MCF 10A (cell line): ENCODE measurements at regions of chr10 and their contacts with region 1.

Region 1: GRCh38 chr10:102225646-102226541 is at the start of gene ELOVL3:
- DNase-seq: peak; percentile 64
- H3K4me3 Mint-ChIP-seq: peak within 1 kb of the TSS; percentile 62
- H3K27ac Mint-ChIP-seq: no peak within 1 kb of the TSS
- H3K4me1 Mint-ChIP-seq: peaks cover 25% of the 10 kb centered on the region
- H3K27me3 Mint-ChIP-seq: peaks cover 37% of the 10 kb centered on the region
- CTCF ChIP-seq: no peak
- total RNA-seq, gene ELOVL3: not detected in 2 replicates

Region 2: GRCh38 chr10:102167861-102168260 is 58.0 kb before region 1 on chr10:
- CTCF ChIA-PET with region 1: interaction called, 21 read pairs
- POLR2A ChIA-PET with region 1: interaction called, 14 read pairs
- intact Hi-C with region 1: loop called (anchors 1 kb)
- DNase-seq: no peak
- H3K4me3 Mint-ChIP-seq: no peak overlapping the region
- H3K27ac Mint-ChIP-seq: no peak overlapping the region
- H3K4me1 Mint-ChIP-seq: peaks cover 5% of the 10 kb centered on the region
- H3K27me3 Mint-ChIP-seq: peaks cover 11% of the 10 kb centered on the region
- CTCF ChIP-seq: no peak

Region 3: GRCh38 chr10:102245101-102245931 is 19.4 kb after region 1 on chr10 and contains the start of gene GBF1:
- CTCF ChIA-PET with region 1: interaction called, 13 read pairs
- POLR2A ChIA-PET with region 1: interaction called, 3 read pairs
- intact Hi-C with region 1: no loop called
- DNase-seq: peak; percentile 100
- H3K4me3 Mint-ChIP-seq: peak within 1 kb of the TSS; percentile 99
- H3K27ac Mint-ChIP-seq: peak within 1 kb of the TSS; percentile 97
- H3K4me1 Mint-ChIP-seq: peaks cover 45% of the 10 kb centered on the region
- H3K27me3 Mint-ChIP-seq: no peaks in the 10 kb centered on the region
- CTCF ChIP-seq: no peak
- total RNA-seq, gene GBF1: 50.0 and 50.6 TPM in 2 replicates

Region 4: GRCh38 chr10:102352066-102352715 is 126.3 kb after region 1 on chr10:
- CTCF ChIA-PET with region 1: interaction called, 354 read pairs
- POLR2A ChIA-PET with region 1: interaction called, 10 read pairs
- intact Hi-C with region 1: loop called (anchors 1 kb)
- DNase-seq: peak; percentile 72
- H3K4me3 Mint-ChIP-seq: no peak overlapping the region
- H3K27ac Mint-ChIP-seq: no peak overlapping the region
- H3K4me1 Mint-ChIP-seq: peaks cover 4% of the 10 kb centered on the region
- H3K27me3 Mint-ChIP-seq: no peaks in the 10 kb centered on the region
- CTCF ChIP-seq: peak; percentile 83

Region 5: DNA sequence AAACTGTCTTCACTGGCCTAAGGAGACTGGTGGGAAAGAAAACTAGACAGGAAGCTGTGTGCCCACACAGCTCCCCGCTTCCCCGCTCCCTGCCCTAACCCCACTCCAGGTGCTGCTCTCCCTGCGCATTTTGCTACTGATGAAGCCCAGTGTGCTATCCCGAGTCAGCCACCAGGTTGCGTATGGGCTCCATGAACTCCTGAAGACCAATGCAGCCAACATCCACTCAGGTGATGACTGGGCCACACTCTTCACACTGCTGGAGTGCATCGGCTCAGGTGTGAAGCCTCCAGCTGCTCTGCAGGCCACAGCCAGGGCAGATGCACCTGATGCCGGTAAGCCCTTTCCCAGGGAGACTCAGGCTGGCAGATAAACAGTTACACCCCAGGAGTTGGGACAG is 149.4 kb after region 1 on chr10:
- CTCF ChIA-PET with region 1: interaction called, 18 read pairs
- POLR2A ChIA-PET with region 1: no interaction called
- intact Hi-C with region 1: no loop called
- DNase-seq: no peak
- H3K4me3 Mint-ChIP-seq: no peak overlapping the region
- H3K27ac Mint-ChIP-seq: no peak overlapping the region
- H3K4me1 Mint-ChIP-seq: no peaks in the 10 kb centered on the region
- H3K27me3 Mint-ChIP-seq: no peaks in the 10 kb centered on the region
- CTCF ChIP-seq: no peak

Region 6: DNA sequence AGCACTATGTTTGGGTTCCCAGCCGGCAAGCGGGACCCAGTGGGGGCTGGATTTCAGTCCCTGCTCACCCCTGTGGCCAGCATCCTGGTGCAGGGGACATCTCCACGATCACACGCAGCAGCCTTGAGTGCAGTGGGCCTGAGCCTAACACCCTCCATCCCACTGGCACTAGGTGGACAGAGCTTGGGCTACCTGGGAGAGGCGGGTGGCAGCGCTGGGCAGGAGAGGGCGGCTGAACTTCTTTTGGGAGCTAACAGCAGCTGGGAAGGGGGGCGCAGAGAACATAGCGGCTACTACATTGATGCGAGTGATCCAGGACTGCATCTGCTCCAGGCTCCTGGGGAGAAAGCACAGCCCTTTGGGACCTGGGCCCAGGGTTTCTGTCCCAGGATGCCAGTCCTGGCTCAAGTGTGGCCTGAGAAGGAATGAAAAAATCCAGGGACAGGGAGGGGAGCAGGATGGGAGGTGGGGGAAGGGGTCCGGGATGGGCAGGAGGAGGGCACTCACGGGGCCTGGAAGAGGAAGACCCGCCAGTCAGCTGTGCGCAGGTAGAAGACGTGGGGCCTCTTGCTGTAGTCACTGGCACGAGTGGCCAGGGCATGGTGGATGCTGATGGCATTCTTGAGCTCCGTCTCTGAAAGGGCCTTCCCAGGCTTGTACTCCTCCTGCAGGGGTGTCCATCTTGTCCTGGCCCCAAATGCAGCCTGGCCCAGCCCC is 178.7 kb after region 1 on chr10:
- CTCF ChIA-PET with region 1: interaction called, 74 read pairs
- POLR2A ChIA-PET with region 1: interaction called, 10 read pairs
- intact Hi-C with region 1: no loop called
- DNase-seq: no peak
- H3K4me3 Mint-ChIP-seq: no peak overlapping the region
- H3K27ac Mint-ChIP-seq: no peak overlapping the region
- H3K4me1 Mint-ChIP-seq: peaks cover 16% of the 10 kb centered on the region
- H3K27me3 Mint-ChIP-seq: peaks cover 18% of the 10 kb centered on the region
- CTCF ChIP-seq: no peak